ENCODE measurements at regions of chr12 and their contacts with region 1.

Region 1: GRCh38 chr12:93894391-93895088 is 217.4 kb downstream of the CRADD start:
- DNase-seq: peak; percentile 91
- ATAC-seq: peak; percentile 90
- H3K4me3 ChIP-seq: no peak overlapping the region
- H3K27ac ChIP-seq: peak overlapping the region; percentile 38 to 95
- H3K4me1 ChIP-seq: no peaks in the 10 kb centered on the region
- H3K27me3 ChIP-seq: no peaks in the 10 kb centered on the region

Region 2: DNA sequence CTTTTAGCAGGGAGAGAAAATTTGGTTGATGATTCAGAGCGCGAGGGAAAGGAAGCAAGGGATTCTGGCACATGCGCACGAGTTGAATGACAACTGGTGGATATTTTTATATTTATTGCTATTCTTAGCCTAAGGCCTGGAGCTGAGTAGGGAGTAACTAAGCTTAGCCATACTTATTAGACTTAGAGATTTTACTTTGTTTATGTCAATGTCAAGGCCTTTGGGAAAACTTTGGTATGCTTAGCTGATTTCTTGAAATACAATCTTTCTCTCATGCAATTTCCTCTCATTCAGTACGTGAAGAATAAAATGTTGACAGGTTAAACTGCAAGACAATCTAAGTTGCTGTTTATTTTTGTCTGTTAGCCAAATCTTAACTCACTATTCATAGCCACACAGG is 116.2 kb before region 1 on chr12:
- intact Hi-C with region 1: loop called in 1 of 2 experiments (anchors 2 kb)
- DNase-seq: peak; percentile 75 to 78
- ATAC-seq: peak; percentile 91
- H3K4me3 ChIP-seq: no peak overlapping the region
- H3K27ac ChIP-seq: peak overlapping the region in 1 of 2 donors; percentile 97
- H3K4me1 ChIP-seq: peaks cover 6 to 16% of the 10 kb centered on the region in 2 donors
- H3K27me3 ChIP-seq: no peaks in the 10 kb centered on the region

Region 3: DNA sequence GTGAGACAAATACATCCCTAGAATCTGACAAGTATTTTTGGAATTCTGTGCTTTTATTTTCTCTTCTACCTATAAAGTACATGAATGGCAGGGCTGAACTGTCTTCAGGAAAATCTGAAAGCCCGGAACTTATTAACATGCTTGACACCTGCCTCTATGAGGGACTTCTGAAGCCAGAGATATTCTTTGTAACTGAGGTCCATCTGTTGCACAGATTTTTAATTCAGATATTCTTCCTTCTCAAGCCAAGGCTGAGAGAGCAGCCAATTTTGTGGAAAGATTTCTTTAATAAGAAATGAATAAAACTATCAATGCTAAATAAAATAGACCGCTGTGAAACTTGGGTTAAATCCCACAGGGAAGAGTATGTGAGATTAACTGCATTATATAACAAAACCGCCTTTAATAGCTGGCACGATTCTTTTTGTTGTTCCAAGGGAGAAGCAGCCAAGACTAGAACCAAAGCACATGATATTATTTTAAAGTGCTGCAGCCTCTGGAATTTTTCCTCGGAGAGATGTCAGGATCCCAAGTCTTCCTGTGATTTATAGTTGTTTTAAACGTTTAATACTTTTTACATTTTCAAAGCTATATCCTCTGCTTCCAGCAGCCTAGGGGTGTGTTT is 68.5 kb before region 1 on chr12:
- intact Hi-C with region 1: loop called in 1 of 2 experiments (anchors 5 kb)
- DNase-seq: no peak
- ATAC-seq: peak; percentile 77
- H3K4me3 ChIP-seq: peak overlapping the region in 1 of 2 donors; percentile 4
- H3K27ac ChIP-seq: peak overlapping the region in 1 of 2 donors; percentile 36
- H3K4me1 ChIP-seq: peaks cover 3 to 8% of the 10 kb centered on the region in 2 donors
- H3K27me3 ChIP-seq: no peaks in the 10 kb centered on the region